T-cell (primary cell): ENCODE measurements at regions of chr4 and their contacts with region 1.

Region 1: GRCh38 chr4:139177868-139178611 is 1.0 kb upstream of the ELF2 start:
- DNase-seq: peak; percentile 70 to 93 (median 84)
- ATAC-seq: peak; percentile 78 to 82 (median 80)
- H3K4me3 ChIP-seq: peak overlapping the region; percentile 65 to 92
- H3K4me3 Mint-ChIP-seq: peak overlapping the region; percentile 82 to 88 (median 86)
- H3K27ac ChIP-seq: peak overlapping the region; percentile 81
- H3K27ac Mint-ChIP-seq: peak overlapping the region; percentile 91
- H3K4me1 ChIP-seq: peaks cover 7 to 14% of the 10 kb centered on the region in 2 experiments
- H3K4me1 Mint-ChIP-seq: peaks cover 21 to 26% (median 25%) of the 10 kb centered on the region in 3 donors
- H3K27me3 ChIP-seq: no peaks in the 10 kb centered on the region
- H3K27me3 Mint-ChIP-seq: no peaks in the 10 kb centered on the region

Region 2: GRCh38 chr4:139015269-139015947 is 162.6 kb before region 1 on chr4 and contains the start of gene NOCT:
- CTCF ChIA-PET with region 1: no interaction called
- POLR2A ChIA-PET with region 1: interaction called in 1 of 2 experiments, 11 read pairs
- DNase-seq: peak; percentile 72 to 96 (median 89)
- ATAC-seq: peak; percentile 91 to 97 (median 96)
- H3K4me3 ChIP-seq: peak within 1 kb of the TSS; percentile 68 to 71
- H3K4me3 Mint-ChIP-seq: peak within 1 kb of the TSS; percentile 82 to 94 (median 86)
- H3K27ac ChIP-seq: peak within 1 kb of the TSS; percentile 89
- H3K27ac Mint-ChIP-seq: peak within 1 kb of the TSS; percentile 92 to 96
- H3K4me1 ChIP-seq: peaks cover 10 to 16% of the 10 kb centered on the region in 2 experiments
- H3K4me1 Mint-ChIP-seq: peaks cover 19 to 26% (median 23%) of the 10 kb centered on the region in 3 donors
- H3K27me3 ChIP-seq: no peaks in the 10 kb centered on the region
- H3K27me3 Mint-ChIP-seq: no peaks in the 10 kb centered on the region
- total RNA-seq, gene NOCT: 2.4 to 19.3 (median 3.1) TPM

Region 3: DNA sequence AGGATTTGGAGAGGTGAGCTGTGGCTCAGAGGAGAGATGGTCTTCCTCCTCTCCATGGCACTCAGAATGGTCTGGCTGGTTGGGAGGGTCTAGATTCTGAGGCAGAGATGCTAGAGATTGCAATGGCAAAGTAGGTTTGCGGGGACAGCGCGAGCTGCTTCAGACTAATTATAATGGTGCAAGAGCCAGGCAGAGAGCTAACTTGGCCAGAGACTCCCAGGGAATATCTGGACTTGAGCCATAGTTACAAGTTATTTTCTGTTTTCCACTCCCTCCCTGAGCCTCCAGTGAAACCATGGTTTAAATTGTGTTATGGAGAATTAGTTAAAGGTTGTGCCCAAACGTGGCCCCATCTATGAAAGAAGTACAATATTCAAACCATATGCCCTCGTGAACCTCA is 43.6 kb after region 1 on chr4:
- CTCF ChIA-PET with region 1: no interaction called
- POLR2A ChIA-PET with region 1: no interaction called
- DNase-seq: no peak
- ATAC-seq: no peak
- H3K4me3 ChIP-seq: no peak overlapping the region
- H3K4me3 Mint-ChIP-seq: no peak overlapping the region
- H3K27ac ChIP-seq: no peak overlapping the region
- H3K27ac Mint-ChIP-seq: no peak overlapping the region
- H3K4me1 ChIP-seq: no peaks in the 10 kb centered on the region
- H3K4me1 Mint-ChIP-seq: peaks cover 2 to 10% (median 10%) of the 10 kb centered on the region in 3 donors
- H3K27me3 ChIP-seq: no peaks in the 10 kb centered on the region
- H3K27me3 Mint-ChIP-seq: no peaks in the 10 kb centered on the region

Region 4: DNA sequence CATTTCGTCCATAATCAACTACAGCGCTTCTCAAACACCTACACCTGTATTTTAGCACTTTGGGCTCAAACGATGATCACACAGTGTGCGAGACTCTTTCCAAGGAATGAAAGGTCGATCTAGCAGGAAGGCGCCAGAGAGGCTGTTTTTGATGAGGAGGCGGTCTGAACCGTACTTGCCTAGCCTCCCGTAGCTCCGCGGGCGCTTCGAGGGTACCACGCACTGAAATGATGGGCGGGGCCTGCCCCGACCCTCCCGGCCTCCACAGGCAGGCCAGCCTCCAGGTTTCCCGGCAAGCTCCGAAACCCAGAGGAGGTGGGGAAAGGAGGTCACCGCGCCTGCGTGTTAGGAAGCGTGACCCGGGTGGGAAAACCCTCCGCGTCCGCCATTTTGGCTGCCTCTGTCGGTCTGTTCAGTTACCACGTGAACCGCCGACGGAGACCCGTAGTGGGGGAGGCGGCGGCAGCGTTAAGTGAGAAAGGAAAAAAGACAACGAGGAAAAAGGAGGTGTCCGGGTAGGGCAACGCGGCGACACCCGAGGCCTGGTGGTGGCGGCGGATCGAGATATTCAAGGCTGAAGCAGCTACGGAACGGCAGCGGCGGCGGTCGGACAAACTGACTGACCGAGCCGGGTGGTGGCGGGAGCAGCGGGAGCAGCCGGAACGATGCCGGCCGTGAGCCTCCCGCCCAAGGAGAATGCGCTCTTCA is 123.2 kb after region 1 on chr4 and contains the start of gene NAA15:
- CTCF ChIA-PET with region 1: interaction called in 1 of 2 experiments, 8 read pairs
- POLR2A ChIA-PET with region 1: interaction called in 1 of 2 experiments, 14 read pairs
- DNase-seq: peak; percentile 91 to 98 (median 97)
- ATAC-seq: peak; percentile 91 to 93 (median 93)
- H3K4me3 ChIP-seq: peak within 1 kb of the TSS; percentile 91 to 100
- H3K4me3 Mint-ChIP-seq: peak within 1 kb of the TSS; percentile 94 to 100 (median 100)
- H3K27ac ChIP-seq: peak within 1 kb of the TSS; percentile 98
- H3K27ac Mint-ChIP-seq: peak within 1 kb of the TSS; percentile 100
- H3K4me1 ChIP-seq: peaks cover 19 to 24% of the 10 kb centered on the region in 2 experiments
- H3K4me1 Mint-ChIP-seq: peaks cover 52 to 62% (median 61%) of the 10 kb centered on the region in 3 donors
- H3K27me3 ChIP-seq: no peaks in the 10 kb centered on the region
- H3K27me3 Mint-ChIP-seq: no peaks in the 10 kb centered on the region
- total RNA-seq, gene NAA15: 45.1 to 64.0 (median 50.7) TPM

Region 5: DNA sequence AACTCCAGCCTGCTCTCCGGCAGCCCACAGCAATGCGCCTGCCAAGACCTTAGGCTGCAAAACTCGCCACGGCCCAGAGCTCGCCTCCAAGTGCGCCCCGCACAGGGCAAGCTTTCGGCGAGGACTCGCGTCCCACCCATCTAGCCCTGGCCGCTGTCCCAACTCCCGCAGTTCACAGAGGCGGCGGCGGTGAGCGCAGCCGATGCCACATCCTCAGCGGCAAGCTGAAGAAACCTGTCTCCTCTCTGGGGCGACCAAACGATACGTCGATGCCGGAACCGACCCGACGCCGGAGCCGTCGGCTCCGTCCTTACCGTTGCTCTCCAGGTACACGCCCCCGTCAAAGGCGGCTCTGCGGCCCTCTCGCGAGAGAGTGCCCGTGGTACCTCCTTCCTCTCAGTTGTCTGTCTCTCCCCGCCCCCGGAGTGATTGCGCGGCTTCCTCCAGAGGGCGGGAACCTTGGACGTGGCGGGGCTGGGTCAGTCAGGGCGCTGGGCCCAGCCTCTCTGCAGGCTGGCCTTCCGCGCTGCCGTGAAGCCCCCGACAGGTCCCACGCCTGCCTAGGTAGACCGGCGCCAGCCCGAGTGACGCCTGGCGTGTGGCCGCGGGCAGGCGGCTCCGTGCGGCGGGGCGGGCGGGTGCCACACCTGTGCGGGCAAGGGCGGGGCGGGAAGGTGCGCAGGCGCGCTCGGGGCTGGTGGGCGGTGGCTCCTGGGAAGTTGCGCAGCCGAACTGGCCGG is 275.5 kb after region 1 on chr4:
- CTCF ChIA-PET with region 1: no interaction called
- POLR2A ChIA-PET with region 1: interaction called in 1 of 2 experiments, 10 read pairs
- DNase-seq: peak; percentile 92 to 99 (median 96)
- ATAC-seq: peak; percentile 87 to 93 (median 90)
- H3K4me3 ChIP-seq: peak overlapping the region; percentile 66 to 83
- H3K4me3 Mint-ChIP-seq: peak overlapping the region; percentile 87 to 98 (median 95)
- H3K27ac ChIP-seq: peak overlapping the region; percentile 97
- H3K27ac Mint-ChIP-seq: peak overlapping the region; percentile 99
- H3K4me1 ChIP-seq: peaks cover 20 to 23% of the 10 kb centered on the region in 2 experiments
- H3K4me1 Mint-ChIP-seq: peaks cover 56 to 64% (median 57%) of the 10 kb centered on the region in 3 donors
- H3K27me3 ChIP-seq: no peaks in the 10 kb centered on the region
- H3K27me3 Mint-ChIP-seq: no peaks in the 10 kb centered on the region